HEK293 (cell line): ENCODE measurements at regions of chr16 and their contacts with region 1.

Region 1: GRCh38 chr16:720990-721764 is at the start of gene ANTKMT:
- H3K4me3 ChIP-seq: peak within 1 kb of the TSS; percentile 66
- H3K27ac ChIP-seq: peak within 1 kb of the TSS; percentile 94
- H3K4me1 ChIP-seq: peaks cover 7% of the 10 kb centered on the region
- CTCF ChIP-seq: no peak; the same call in 1 of the 2 replicates

Region 2: GRCh38 chr16:391885-392335 is 329.3 kb before region 1 on chr16:
- CTCF ChIA-PET with region 1: no interaction called
- POLR2A ChIA-PET with region 1: no interaction called
- H3K4me3 ChIP-seq: no peak overlapping the region
- H3K27ac ChIP-seq: no peak overlapping the region
- H3K4me1 ChIP-seq: no peaks in the 10 kb centered on the region
- CTCF ChIP-seq: peak; percentile 67

Region 3: GRCh38 chr16:521381-522210 is 199.6 kb before region 1 on chr16:
- CTCF ChIA-PET with region 1: no interaction called
- POLR2A ChIA-PET with region 1: no interaction called
- H3K4me3 ChIP-seq: no peak overlapping the region
- H3K27ac ChIP-seq: no peak overlapping the region
- H3K4me1 ChIP-seq: no peaks in the 10 kb centered on the region
- CTCF ChIP-seq: no peak

Region 4: DNA sequence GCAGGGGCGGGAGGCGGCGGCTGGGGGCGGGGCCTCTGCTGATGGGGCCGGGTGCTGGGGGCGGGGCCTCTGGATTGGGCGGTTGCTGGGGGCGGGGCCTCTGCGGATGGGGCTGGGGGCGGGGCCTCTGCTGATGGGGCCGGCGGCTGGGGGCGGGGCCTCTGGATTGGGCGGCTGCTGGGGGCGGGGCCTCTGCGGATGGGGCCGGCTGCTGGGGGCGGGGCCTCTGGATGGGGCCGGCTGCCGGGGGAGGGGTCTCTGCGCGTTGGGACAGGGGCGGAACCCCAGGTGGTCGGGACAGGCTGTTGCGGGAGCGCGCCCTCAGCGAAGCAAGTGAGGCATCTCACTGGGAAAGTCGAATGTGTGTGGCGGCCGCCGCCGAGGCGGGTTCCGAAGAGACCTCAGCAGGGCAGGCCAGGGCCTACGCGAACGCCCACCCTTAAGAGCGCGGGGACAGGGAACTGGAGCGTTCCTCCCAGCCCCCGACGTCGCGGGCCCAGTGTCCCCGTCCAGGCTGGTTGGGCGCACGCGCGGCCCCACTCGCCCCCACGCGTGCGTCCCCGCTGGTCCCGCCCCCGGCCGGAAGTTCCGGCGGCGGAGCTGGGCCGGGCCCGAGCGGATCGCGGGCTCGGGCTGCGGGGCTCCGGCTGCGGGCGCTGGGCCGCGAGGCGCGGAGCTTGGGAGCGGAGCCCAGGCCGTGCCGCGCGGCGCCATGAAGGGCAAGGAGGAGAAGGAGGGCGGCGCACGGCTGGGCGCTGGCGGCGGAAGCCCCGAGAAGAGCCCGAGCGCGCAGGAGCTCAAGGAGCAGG is 41.2 kb before region 1 on chr16 and contains the start of gene STUB1:
- CTCF ChIA-PET with region 1: no interaction called
- POLR2A ChIA-PET with region 1: interaction called, 15 read pairs
- H3K4me3 ChIP-seq: peak within 1 kb of the TSS; percentile 82
- H3K27ac ChIP-seq: peak within 1 kb of the TSS; percentile 97
- H3K4me1 ChIP-seq: peaks cover 14% of the 10 kb centered on the region; the same call in 1 of the 2 replicates
- CTCF ChIP-seq: no peak

Region 5: GRCh38 chr16:695355-696089 is 25.7 kb before region 1 on chr16:
- CTCF ChIA-PET with region 1: interaction called, 4 read pairs
- POLR2A ChIA-PET with region 1: interaction called, 12 read pairs
- H3K4me3 ChIP-seq: peak overlapping the region; percentile 25
- H3K27ac ChIP-seq: no peak overlapping the region; the same call in 1 of the 2 replicates
- H3K4me1 ChIP-seq: no peaks in the 10 kb centered on the region
- CTCF ChIP-seq: no peak

Region 6: GRCh38 chr16:799948-800833 is 79.0 kb after region 1 on chr16 and contains the start of gene GNG13:
- CTCF ChIA-PET with region 1: interaction called, 3 read pairs
- POLR2A ChIA-PET with region 1: interaction called, 13 read pairs
- H3K4me3 ChIP-seq: peak within 1 kb of the TSS; percentile 13
- H3K27ac ChIP-seq: no peak within 1 kb of the TSS
- H3K4me1 ChIP-seq: peaks cover 2% of the 10 kb centered on the region; the same call in 1 of the 2 replicates
- CTCF ChIP-seq: no peak